Posterior vena cava (tissue), 2 donors: ENCODE measurements at regions of chr14 and their contacts with region 1.

Region 1: DNA sequence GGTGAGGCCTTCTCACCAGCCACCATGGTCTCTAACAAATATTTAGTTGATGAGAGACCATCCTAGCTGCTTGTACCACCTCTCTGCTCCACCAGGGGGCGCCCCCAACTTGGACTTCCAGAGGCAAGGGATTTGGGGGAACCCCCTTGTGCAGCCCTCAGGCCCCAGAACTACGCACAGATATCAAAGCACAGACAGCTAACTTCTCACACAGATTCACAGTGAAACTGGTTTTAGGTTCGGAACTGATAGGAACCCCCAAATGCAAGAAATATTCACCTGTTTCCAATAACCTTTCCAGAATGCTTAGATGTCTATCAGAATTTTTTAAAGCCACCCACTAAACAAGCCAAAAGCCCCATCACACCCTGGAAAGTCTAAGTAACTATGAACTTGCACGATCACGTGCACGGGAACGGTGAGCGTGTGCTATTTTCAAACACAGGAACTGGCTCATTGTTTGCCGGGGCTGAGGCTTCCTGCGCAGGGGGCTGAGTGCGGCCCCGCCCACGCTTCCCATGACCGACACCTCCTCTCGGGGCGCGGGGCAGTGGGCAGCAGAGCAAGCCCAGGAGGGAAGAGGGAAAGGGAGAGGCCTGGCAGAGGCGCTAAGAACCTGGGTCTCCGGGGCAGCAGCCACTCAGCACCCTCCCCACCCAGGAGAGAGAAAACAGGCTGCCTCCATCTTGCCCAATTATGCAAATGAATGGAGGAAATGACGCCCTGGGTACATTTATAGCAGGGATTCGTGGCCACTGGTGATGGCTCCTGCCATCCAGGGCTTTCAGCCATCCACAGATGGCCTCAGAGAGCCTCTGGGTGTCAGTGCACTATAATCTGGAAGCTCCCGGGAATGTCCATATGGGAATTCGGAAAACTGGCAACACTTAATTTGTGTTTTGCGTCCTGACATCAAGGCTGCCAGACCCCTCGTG is 79.4 kb upstream of the GPR68 start:
- DNase-seq: peak; percentile 96

Region 2: DNA sequence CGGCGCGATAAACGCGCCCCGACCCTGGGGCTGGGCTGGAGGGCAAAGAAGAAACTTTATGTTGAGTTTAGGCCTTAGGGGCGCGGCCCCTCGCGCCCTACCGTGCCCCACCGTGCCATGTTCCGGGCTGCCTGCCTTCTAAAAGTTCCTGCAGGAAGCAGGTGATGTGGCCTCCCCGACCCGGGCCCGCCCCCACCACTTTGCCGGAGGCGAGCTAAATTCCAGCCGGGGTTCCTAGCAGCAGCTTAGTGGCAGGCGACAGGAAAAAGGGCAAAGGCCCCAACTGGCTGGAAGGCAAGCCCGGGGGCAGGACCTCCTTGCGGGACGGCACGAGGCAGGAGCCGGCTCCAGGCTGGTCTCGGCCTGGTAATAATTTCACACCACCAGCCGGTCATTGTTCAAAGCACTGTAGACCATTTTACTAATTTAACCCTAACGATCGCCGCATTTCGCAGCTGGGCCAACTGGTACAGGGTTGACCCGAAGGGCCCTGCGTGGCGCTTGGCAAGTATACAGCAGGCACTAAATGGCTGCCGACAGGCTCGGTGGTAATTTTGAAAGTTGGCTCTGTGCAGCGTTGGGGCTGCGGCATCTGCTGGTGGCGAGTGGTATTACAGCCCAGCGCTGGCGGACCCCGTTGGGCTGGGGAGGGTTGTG is 94.6 kb after region 1 on chr14:
- intact Hi-C with region 1: loop called (anchors 2 to 5 kb)
- DNase-seq: peak; percentile 89